Heart left ventricle (tissue), 16 donors: ENCODE measurements at regions of chr13 and their contacts with region 1.

Region 1: GRCh38 chr13:50829896-50830295 is 13.6 kb downstream of the DLEU7 start:
- DNase-seq: no peak
- ATAC-seq: no peak
- H3K4me3 ChIP-seq: no peak overlapping the region
- H3K27ac ChIP-seq: no peak overlapping the region
- H3K4me1 ChIP-seq: peaks cover 0 to 8% (median 0%) of the 10 kb centered on the region in 12 donors
- H3K27me3 ChIP-seq: no peaks in the 10 kb centered on the region
- CTCF ChIP-seq: no peak
- POLR2A ChIP-seq: no peak

Region 2: DNA sequence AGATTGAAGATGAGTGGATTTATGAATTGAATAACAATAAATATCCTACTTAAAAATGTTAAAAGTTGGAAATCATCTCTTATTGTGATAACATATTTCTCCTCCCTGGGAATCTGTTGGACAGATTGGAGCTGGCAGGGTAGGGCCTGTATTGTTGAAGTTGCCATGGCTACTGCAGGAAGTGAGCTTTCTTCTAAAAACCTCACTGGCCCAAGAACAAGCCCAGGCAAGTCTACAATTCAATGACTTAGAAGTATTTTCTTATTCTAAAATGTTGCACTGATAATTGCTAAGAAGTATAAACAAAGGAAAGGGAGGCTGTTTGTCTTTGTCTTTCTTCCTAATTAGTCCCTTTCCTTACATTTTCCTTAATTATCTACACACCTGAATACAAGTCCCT is 98.5 kb before region 1 on chr13:
- intact Hi-C with region 1: no loop called
- DNase-seq: peak in 2 of 5 donors; percentile 37 to 50
- ATAC-seq: peak in 2 of 4 donors; percentile 59 to 96
- H3K4me3 ChIP-seq: no peak overlapping the region
- H3K27ac ChIP-seq: peak overlapping the region in 9 of 12 donors; percentile 12 to 74 (median 54)
- H3K4me1 ChIP-seq: peaks cover 0 to 13% (median 4%) of the 10 kb centered on the region in 12 donors
- H3K27me3 ChIP-seq: no peaks in the 10 kb centered on the region
- CTCF ChIP-seq: no peak
- POLR2A ChIP-seq: no peak

Region 3: DNA sequence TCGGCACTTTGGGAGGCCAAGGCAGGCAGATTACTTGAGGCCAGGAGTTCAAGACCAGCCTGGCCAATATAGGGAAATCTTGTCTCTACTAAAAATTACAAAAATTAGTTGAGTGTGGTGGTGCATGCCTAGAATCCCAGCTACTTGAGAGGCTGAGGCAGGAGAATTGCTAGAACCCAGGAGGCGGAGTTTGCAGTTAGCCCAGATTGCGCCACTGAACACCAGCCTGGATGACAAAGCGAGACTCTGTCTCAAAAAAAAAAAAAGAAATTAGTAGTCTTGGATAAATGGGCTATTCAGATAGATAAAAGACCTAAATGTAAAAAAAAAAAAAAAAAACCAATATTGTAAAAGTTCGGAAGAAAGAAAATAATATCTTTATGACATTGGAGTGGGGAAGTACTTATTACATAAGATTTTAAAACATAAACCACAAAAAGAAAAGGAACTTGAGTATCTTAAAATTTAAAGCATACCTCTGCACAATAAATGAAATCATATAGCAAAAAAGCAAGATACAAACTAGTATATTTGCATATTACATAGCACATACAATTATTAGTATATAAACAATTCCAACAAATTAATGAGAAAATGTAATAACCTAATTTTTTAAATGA is 53.0 kb after region 1 on chr13:
- intact Hi-C with region 1: loop called in 1 of 10 experiments (anchors 10 kb)
- DNase-seq: no peak
- ATAC-seq: no peak
- H3K4me3 ChIP-seq: no peak overlapping the region
- H3K27ac ChIP-seq: no peak overlapping the region
- H3K4me1 ChIP-seq: no peaks in the 10 kb centered on the region
- H3K27me3 ChIP-seq: no peaks in the 10 kb centered on the region
- CTCF ChIP-seq: no peak
- POLR2A ChIP-seq: no peak

Region 4: DNA sequence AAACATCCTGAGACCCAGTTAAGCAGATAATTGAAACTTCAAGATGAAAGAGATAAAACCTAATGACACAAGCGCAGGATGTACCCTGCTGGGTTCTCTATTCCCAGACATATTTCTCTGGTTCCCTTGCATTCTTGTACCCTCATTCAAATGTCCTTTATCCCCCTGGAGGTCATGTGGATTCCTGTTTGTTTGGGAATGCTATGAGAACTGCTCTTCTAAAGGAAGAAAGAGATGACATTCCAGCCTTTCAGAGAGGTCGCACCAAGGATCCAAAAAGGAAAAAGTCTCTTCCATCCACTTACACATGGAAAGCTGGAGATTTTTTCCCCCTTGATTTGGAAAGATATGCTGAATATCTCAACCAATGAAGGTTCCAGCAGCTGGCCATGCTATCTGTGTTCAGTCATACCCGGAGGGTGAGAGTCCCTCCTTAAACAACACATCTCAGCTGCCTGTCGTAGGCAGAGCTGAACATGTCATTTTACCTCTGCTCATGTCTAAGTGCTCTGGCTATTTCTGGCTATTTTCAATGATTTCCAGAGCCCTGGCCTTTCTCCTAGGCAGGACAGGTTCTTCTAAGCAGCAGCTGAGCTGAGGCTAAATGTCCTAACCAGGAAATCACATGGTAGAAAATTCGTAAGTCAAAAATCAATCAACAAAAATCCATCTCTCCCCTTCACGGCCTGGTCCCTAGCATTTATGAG is 228.7 kb after region 1 on chr13:
- intact Hi-C with region 1: loop called in 1 of 10 experiments (anchors 10 kb)
- DNase-seq: no peak
- ATAC-seq: no peak
- H3K4me3 ChIP-seq: no peak overlapping the region
- H3K27ac ChIP-seq: no peak overlapping the region
- H3K4me1 ChIP-seq: no peaks in the 10 kb centered on the region
- H3K27me3 ChIP-seq: no peaks in the 10 kb centered on the region
- CTCF ChIP-seq: no peak
- POLR2A ChIP-seq: no peak